ENCODE measurements at regions of chr4 and their contacts with region 1.

Region 1: DNA sequence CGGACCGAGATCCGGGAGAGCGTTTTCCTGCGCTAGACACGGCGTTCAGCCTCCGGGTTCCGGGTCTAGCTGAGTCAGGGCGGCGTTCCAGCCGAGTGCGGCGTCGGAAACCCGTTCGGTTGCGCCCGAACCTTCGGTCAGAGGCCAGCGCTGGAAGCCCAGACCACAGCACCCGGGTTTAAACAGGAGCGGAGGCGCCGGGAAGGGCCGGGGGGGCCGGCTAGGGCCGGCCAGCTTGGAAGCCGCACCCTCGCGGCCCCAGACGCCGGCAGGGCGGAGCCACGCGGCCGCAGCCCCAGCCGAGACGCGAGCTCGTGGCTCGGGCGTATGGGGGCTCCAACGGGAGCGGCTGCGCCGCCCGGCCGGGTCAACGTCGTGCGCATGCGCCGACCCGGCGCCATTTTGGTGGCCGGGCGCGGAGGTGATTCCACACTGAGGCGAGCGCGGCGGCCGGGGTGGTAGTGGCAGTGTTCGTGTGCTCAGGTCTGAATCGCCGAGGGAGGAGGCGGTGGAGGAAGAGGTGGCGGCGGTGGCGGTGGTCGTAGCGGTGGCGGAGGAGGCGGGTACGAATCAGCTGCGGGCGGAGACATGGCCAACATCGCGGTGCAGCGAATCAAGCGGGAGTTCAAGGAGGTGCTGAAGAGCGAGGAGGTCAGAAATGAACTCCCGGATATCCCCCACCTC is at the start of gene UBE2K:
- DNase-seq: peak; percentile 91 to 94
- H3K4me3 ChIP-seq: peak within 1 kb of the TSS; percentile 79
- H3K4me3 Mint-ChIP-seq: peak within 1 kb of the TSS; percentile 88
- H3K27ac Mint-ChIP-seq: peak within 1 kb of the TSS; percentile 92
- H3K4me1 ChIP-seq: peaks cover 20% of the 10 kb centered on the region
- H3K4me1 Mint-ChIP-seq: peaks cover 18% of the 10 kb centered on the region
- H3K27me3 ChIP-seq: no peaks in the 10 kb centered on the region
- H3K27me3 Mint-ChIP-seq: no peaks in the 10 kb centered on the region
- CTCF ChIP-seq: no peak
- total RNA-seq, gene UBE2K: 141 and 144 TPM in 2 replicates

Region 2: GRCh38 chr4:39621582-39621981 is 76.3 kb before region 1 on chr4:
- CTCF ChIA-PET with region 1: no interaction called
- POLR2A ChIA-PET with region 1: no interaction called
- intact Hi-C with region 1: loop called (anchors 5 kb)
- DNase-seq: peak in 1 of 2 experiments; percentile 73
- H3K4me3 ChIP-seq: no peak overlapping the region
- H3K4me3 Mint-ChIP-seq: no peak overlapping the region
- H3K27ac Mint-ChIP-seq: peak overlapping the region; percentile 45
- H3K4me1 ChIP-seq: peaks cover 42% of the 10 kb centered on the region
- H3K4me1 Mint-ChIP-seq: peaks cover 9% of the 10 kb centered on the region
- H3K27me3 ChIP-seq: no peaks in the 10 kb centered on the region
- H3K27me3 Mint-ChIP-seq: no peaks in the 10 kb centered on the region
- CTCF ChIP-seq: no peak

Region 3: GRCh38 chr4:39638354-39639240 is 59.3 kb before region 1 on chr4 and contains the start of gene SMIM14:
- CTCF ChIA-PET with region 1: no interaction called
- POLR2A ChIA-PET with region 1: interaction called, 9 read pairs
- intact Hi-C with region 1: loop called (anchors 1 kb)
- DNase-seq: peak; percentile 98 to 99
- H3K4me3 ChIP-seq: peak within 1 kb of the TSS; percentile 94
- H3K4me3 Mint-ChIP-seq: peak within 1 kb of the TSS; percentile 85
- H3K27ac Mint-ChIP-seq: peak within 1 kb of the TSS; percentile 74
- H3K4me1 ChIP-seq: peaks cover 28% of the 10 kb centered on the region
- H3K4me1 Mint-ChIP-seq: peaks cover 15% of the 10 kb centered on the region
- H3K27me3 ChIP-seq: no peaks in the 10 kb centered on the region
- H3K27me3 Mint-ChIP-seq: no peaks in the 10 kb centered on the region
- CTCF ChIP-seq: no peak
- total RNA-seq, gene SMIM14: 37.6 and 41.0 TPM in 2 replicates

Region 4: DNA sequence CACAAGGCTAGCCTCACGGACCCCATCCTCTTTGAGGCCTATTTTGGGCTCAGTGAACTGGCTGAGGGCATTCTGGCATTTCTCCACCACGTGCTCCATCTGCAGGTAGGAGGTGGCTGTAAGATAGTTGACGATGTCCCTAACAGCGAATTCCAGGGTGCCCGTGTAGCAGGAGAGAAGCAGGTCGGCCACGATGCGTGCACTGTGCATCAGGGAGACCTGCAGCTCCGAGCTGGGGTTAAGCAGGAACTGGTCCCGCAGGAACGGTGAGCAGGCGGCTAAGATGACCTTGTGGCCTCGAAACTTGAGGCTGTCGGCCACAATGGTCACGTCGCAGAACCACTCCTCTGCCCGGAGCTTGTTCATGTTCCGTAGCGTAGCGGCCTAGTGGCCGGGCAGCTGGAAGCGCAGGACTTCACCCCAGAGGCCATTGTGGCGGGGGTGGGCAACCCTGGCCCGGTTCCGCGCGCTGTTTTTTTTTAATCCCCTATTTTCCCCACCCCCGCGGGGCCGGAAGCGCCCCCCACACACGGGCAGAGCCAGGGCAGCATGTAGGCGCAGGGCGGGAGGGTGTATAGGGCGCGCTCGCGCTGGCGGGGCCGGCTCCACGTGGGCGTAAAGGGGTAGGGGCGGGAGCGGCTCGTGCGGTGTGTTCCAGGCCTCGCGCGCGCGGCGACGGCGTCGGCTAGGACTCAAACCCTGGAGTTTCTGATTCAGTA is 73.3 kb after region 1 on chr4:
- CTCF ChIA-PET with region 1: no interaction called
- POLR2A ChIA-PET with region 1: no interaction called
- intact Hi-C with region 1: loop called (anchors 5 kb)
- DNase-seq: peak in 1 of 2 experiments; percentile 12
- H3K4me3 ChIP-seq: no peak overlapping the region
- H3K4me3 Mint-ChIP-seq: no peak overlapping the region
- H3K27ac Mint-ChIP-seq: no peak overlapping the region
- H3K4me1 ChIP-seq: no peaks in the 10 kb centered on the region
- H3K4me1 Mint-ChIP-seq: no peaks in the 10 kb centered on the region
- H3K27me3 ChIP-seq: no peaks in the 10 kb centered on the region
- H3K27me3 Mint-ChIP-seq: no peaks in the 10 kb centered on the region
- CTCF ChIP-seq: no peak

Region 5: GRCh38 chr4:39823191-39823590 is 125.3 kb after region 1 on chr4:
- CTCF ChIA-PET with region 1: no interaction called
- POLR2A ChIA-PET with region 1: no interaction called
- intact Hi-C with region 1: no loop called
- DNase-seq: no peak
- H3K4me3 ChIP-seq: no peak overlapping the region
- H3K4me3 Mint-ChIP-seq: no peak overlapping the region
- H3K27ac Mint-ChIP-seq: peak overlapping the region; percentile 39
- H3K4me1 ChIP-seq: no peaks in the 10 kb centered on the region
- H3K4me1 Mint-ChIP-seq: no peaks in the 10 kb centered on the region
- H3K27me3 ChIP-seq: no peaks in the 10 kb centered on the region
- H3K27me3 Mint-ChIP-seq: no peaks in the 10 kb centered on the region
- CTCF ChIP-seq: no peak

Region 6: DNA sequence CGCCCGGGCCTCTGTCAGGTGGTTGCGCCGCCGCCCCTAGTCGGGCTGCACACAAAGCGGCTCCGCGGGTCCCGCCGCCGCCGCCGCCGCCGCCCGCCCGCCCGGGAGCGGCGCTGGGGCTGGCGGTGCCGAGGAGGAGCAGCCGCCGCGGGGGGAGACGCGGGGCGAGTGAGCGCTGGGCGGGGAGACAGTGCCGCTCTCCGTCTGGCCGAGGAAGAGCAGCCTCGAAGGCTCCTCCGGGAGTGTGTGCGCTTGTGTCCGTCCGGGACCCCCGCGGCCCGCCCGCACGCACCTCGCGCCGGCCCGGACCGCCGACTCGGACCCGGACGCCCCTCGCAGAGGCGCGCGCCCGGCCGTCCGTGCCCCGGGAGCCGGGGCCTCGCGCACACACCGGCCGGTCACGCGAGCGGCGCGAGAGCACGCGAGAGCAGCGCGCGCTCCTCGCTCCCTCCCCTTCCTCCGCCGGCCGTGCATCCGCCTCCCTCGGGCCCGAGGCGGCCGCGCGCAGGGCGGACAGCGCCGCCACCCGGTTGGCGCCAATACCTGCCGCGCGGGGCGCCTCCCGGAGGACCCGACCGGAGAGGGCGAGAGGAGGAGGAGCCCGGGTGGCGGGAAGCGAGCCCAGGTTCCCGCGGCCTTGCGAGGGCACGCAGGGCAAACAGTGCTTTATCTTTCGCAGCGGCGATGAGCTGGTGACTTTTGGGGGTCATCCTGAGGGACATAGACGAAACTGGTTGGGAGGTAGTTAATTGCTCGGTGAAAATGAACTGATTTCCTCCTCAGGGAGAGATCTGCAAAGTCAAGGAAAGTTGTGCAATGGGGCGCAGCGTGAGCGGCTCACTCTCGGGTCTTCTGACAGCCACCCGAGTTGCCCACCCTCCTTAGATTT is 279.9 kb after region 1 on chr4 and contains the start of gene PDS5A:
- CTCF ChIA-PET with region 1: no interaction called
- POLR2A ChIA-PET with region 1: no interaction called
- intact Hi-C with region 1: loop called (anchors 1 kb)
- DNase-seq: peak; percentile 85 to 94
- H3K4me3 ChIP-seq: peak within 1 kb of the TSS; percentile 92
- H3K4me3 Mint-ChIP-seq: peak within 1 kb of the TSS; percentile 79
- H3K27ac Mint-ChIP-seq: peak within 1 kb of the TSS; percentile 86
- H3K4me1 ChIP-seq: peaks cover 11% of the 10 kb centered on the region
- H3K4me1 Mint-ChIP-seq: peaks cover 6% of the 10 kb centered on the region
- H3K27me3 ChIP-seq: no peaks in the 10 kb centered on the region
- H3K27me3 Mint-ChIP-seq: no peaks in the 10 kb centered on the region
- CTCF ChIP-seq: peak; percentile 73 to 82
- total RNA-seq, gene PDS5A: 78.8 and 84.0 TPM in 2 replicates

Region 7: GRCh38 chr4:40056716-40057585 is 359.1 kb after region 1 on chr4 and contains the start of gene N4BP2:
- CTCF ChIA-PET with region 1: interaction called, 8 read pairs
- POLR2A ChIA-PET with region 1: interaction called, 5 read pairs
- intact Hi-C with region 1: loop called (anchors 5 kb)
- DNase-seq: peak; percentile 78 to 88
- H3K4me3 ChIP-seq: peak within 1 kb of the TSS; percentile 74
- H3K4me3 Mint-ChIP-seq: peak within 1 kb of the TSS; percentile 92
- H3K27ac Mint-ChIP-seq: peak within 1 kb of the TSS; percentile 93
- H3K4me1 ChIP-seq: peaks cover 5% of the 10 kb centered on the region; the same call in 1 of the 2 replicates
- H3K4me1 Mint-ChIP-seq: peaks cover 13% of the 10 kb centered on the region
- H3K27me3 ChIP-seq: no peaks in the 10 kb centered on the region
- H3K27me3 Mint-ChIP-seq: no peaks in the 10 kb centered on the region
- CTCF ChIP-seq: peak; percentile 42 to 72
- total RNA-seq, gene N4BP2: 27.5 and 28.7 TPM in 2 replicates

Measured in Caco-2 (cell line).